Calu3 (cell line): ENCODE measurements at regions of chr1 and their contacts with region 1.

Region 1: GRCh38 chr1:186482661-186483255 is 21.8 kb upstream of the PDC start:
- DNase-seq: peak; percentile 78
- H3K4me3 Mint-ChIP-seq: no peak overlapping the region
- H3K27ac Mint-ChIP-seq: no peak overlapping the region
- H3K4me1 Mint-ChIP-seq: peaks cover 28% of the 10 kb centered on the region
- H3K27me3 Mint-ChIP-seq: no peaks in the 10 kb centered on the region
- CTCF ChIP-seq: peak; percentile 97

Region 2: DNA sequence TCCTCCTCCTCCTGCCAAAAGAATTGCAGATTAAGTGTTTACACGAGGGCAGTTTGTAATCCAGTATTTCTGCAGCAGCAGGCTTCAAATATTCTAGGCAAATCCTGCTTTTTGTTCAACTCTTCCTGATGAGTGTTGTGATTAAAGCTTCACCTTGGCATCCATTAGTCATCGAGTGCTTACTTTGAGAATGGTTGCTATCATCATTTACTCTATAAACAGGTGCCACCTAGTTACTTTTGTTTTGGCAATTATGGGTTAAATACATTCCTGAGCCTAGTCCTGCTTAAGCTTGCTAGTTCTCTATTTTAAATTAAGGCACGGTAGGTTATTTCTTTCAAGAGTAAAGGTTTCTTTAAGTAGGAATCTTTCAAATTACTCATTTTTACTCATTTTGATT is 42.2 kb before region 1 on chr1:
- CTCF ChIA-PET with region 1: no interaction called
- intact Hi-C with region 1: no loop called
- DNase-seq: no peak
- H3K4me3 Mint-ChIP-seq: no peak overlapping the region
- H3K27ac Mint-ChIP-seq: no peak overlapping the region
- H3K4me1 Mint-ChIP-seq: peaks cover 8% of the 10 kb centered on the region
- H3K27me3 Mint-ChIP-seq: no peaks in the 10 kb centered on the region
- CTCF ChIP-seq: no peak

Region 3: GRCh38 chr1:186605762-186606350 is 123.1 kb after region 1 on chr1:
- CTCF ChIA-PET with region 1: interaction called, 7 read pairs
- intact Hi-C with region 1: loop called (anchors 1 kb)
- DNase-seq: peak; percentile 76
- H3K4me3 Mint-ChIP-seq: no peak overlapping the region
- H3K27ac Mint-ChIP-seq: peak overlapping the region; percentile 51
- H3K4me1 Mint-ChIP-seq: peaks cover 26% of the 10 kb centered on the region
- H3K27me3 Mint-ChIP-seq: no peaks in the 10 kb centered on the region
- CTCF ChIP-seq: peak; percentile 89

Region 4: DNA sequence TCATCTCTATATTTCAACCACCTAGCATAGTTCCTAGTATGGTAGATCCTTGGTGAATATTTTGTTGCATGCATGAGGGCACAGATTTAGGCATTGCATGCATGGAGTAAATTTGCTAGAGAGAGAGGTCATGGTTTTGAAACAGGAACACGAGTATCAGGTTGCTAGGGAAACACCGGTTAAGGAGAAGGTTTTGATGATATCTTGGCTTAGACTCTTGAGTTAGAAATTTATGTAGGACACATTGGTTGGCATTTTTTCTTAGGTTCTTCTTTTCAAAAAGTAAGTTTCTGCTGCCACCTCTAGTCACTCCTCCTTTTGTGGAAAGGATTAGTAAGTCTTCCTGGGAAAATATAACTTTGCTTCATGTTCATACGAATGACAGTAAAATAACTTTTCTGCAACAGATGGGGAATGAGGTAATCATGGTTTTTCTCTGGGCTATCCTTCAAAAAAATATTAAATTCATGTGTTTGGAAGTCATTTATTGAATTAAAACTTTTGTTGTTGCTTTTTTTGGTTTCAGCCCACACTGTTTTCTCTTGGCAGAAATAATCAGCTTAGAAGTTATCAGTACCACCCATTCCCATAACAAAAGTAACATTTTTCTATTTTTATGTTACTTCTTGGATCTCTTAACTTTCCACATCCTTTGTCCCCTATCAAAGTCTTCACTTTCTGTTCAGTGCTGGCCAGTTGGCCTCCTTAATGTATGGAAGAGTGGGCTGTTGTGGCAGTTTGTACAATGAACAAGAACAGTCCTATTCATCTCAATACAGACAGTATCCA is 443.3 kb after region 1 on chr1:
- CTCF ChIA-PET with region 1: no interaction called
- intact Hi-C with region 1: loop called (anchors 5 kb)
- DNase-seq: no peak
- H3K4me3 Mint-ChIP-seq: no peak overlapping the region
- H3K27ac Mint-ChIP-seq: peak overlapping the region; percentile 30
- H3K4me1 Mint-ChIP-seq: peaks cover 58% of the 10 kb centered on the region
- H3K27me3 Mint-ChIP-seq: no peaks in the 10 kb centered on the region
- CTCF ChIP-seq: no peak

Region 5: GRCh38 chr1:186985889-186986491 is 503.2 kb after region 1 on chr1:
- CTCF ChIA-PET with region 1: no interaction called
- intact Hi-C with region 1: loop called (anchors 1 kb)
- DNase-seq: peak; percentile 35
- H3K4me3 Mint-ChIP-seq: no peak overlapping the region
- H3K27ac Mint-ChIP-seq: peak overlapping the region; percentile 37
- H3K4me1 Mint-ChIP-seq: peaks cover 19% of the 10 kb centered on the region
- H3K27me3 Mint-ChIP-seq: no peaks in the 10 kb centered on the region
- CTCF ChIP-seq: peak; percentile 60